Gastrocnemius medialis (tissue), 4 donors: ENCODE measurements at regions of chrX and their contacts with region 1.

Region 1: GRCh38 chrX:48945516-48946348 is 11.7 kb downstream of the OTUD5 start:
- DNase-seq: peak in 1 of 2 donors; percentile 15
- ATAC-seq: no peak
- H3K4me3 ChIP-seq: no peak overlapping the region
- H3K27ac ChIP-seq: no peak overlapping the region
- H3K4me1 ChIP-seq: peaks cover 0 to 5% of the 10 kb centered on the region in 2 donors
- H3K27me3 ChIP-seq: no peaks in the 10 kb centered on the region
- CTCF ChIP-seq: peak; percentile 17 to 57 (median 29)
- POLR2A ChIP-seq: no peak

Region 2: DNA sequence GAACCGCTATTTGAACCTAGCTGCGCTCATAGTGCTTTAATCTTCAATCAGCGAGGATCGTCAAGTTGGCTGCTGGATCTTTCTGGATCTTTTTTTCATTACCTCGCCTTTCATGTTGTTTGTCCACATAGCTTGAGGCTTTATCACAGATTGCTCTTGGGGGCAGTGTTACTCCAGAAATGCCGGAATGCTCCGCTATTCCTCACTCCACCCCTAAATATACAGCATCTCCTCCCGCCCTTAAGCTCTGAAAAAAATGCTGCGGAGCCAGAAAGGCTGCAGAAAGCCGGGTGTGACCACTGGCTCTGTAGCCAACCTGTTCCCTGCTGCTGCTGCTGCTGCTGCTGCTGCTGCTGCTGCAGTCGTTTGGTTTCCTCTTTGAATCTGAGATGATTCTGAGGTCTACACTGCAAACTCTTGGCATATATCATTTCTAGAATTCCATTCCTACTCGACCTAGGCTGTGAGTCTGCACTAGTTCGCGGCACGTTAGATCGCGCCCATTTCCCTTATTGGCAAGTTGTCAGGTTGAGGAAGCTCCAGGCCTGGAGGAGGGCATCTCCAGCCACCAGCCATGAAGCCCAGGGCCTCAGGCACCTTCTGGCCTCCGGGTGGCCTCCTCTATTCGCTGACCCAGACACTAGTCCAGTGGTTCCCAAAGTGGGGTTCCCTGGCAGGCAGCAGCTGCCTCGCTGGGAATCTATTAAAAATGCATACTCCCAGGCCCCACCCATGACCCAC is 314.2 kb before region 1 on chrX:
- in situ Hi-C with region 1: loop called in 1 of 4 experiments (anchors 25 kb)
- intact Hi-C with region 1: no loop called
- DNase-seq: peak; percentile 25 to 55
- ATAC-seq: peak; percentile 77 to 78
- H3K4me3 ChIP-seq: no peak overlapping the region
- H3K27ac ChIP-seq: no peak overlapping the region
- H3K4me1 ChIP-seq: no peaks in the 10 kb centered on the region
- H3K27me3 ChIP-seq: no peaks in the 10 kb centered on the region
- CTCF ChIP-seq: peak in 3 of 5 experiments; percentile 12 to 28 (median 26)
- POLR2A ChIP-seq: no peak

Region 3: DNA sequence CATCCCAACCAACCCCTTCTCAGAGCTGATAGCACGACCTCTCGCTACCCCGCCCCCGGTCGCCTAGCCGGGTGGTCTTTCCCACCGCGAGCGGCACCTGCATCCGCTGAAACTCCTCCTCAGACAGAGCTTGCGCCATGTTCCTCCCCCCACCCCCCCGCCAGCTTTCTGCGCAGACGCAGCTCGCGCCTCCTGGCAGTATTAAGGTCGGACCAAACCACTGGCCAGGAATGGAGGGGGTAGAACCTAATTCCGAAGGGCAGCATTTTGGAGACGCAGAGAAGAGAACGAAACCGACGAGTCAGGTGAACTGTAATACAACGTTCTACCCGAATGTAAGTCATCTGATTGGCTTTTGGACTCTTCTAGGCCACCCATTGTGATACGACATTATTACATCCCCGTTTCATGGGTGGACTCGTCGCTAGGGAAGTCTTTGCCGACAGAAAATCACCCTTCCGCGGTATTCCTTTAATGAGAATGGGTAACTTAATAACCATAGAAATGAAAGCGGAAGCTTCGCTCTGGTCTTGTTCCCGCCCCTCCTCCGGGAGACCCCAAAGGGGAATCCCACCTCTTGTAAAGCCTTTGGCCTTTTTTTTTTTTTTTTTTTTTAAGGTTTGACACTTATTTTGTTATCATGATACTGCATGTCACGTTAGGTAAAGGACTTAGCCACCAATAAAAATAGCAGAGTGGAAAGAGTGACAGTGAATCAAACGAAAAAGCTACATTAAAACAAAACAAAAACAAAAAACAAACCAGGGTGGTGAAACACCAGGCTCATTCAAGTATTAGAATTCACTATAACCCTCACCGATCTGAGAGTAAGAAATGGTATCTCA is 56.6 kb after region 1 on chrX and contains the start of gene GRIPAP1:
- in situ Hi-C with region 1: no loop called
- intact Hi-C with region 1: no loop called
- DNase-seq: peak; percentile 47 to 61
- ATAC-seq: peak; percentile 96 to 97
- H3K4me3 ChIP-seq: peak within 1 kb of the TSS; percentile 69 to 89 (median 75)
- H3K27ac ChIP-seq: peak within 1 kb of the TSS; percentile 77 to 89 (median 83)
- H3K4me1 ChIP-seq: peaks cover 3 to 7% of the 10 kb centered on the region in 2 donors
- H3K27me3 ChIP-seq: no peaks in the 10 kb centered on the region
- CTCF ChIP-seq: no peak
- POLR2A ChIP-seq: peak; percentile 46 to 53
- total RNA-seq, gene GRIPAP1: 8.6 to 19.3 (median 10.1) TPM

Region 4: GRCh38 chrX:49079489-49080428 is 134.0 kb after region 1 on chrX and contains the start of gene WDR45:
- in situ Hi-C with region 1: no loop called
- intact Hi-C with region 1: no loop called
- DNase-seq: peak; percentile 61 to 70
- ATAC-seq: peak; percentile 96 to 98
- H3K4me3 ChIP-seq: peak within 1 kb of the TSS; percentile 60 to 79 (median 72)
- H3K27ac ChIP-seq: peak within 1 kb of the TSS; percentile 88 to 97 (median 94)
- H3K4me1 ChIP-seq: peaks cover 0 to 6% of the 10 kb centered on the region in 2 donors
- H3K27me3 ChIP-seq: no peaks in the 10 kb centered on the region
- CTCF ChIP-seq: no peak
- POLR2A ChIP-seq: peak; percentile 68 to 78
- total RNA-seq, gene WDR45: 98.2 to 125 (median 105) TPM

Region 5: GRCh38 chrX:49184294-49185061 is 238.7 kb after region 1 on chrX:
- in situ Hi-C with region 1: no loop called
- intact Hi-C with region 1: no loop called
- DNase-seq: peak; percentile 81 to 90
- ATAC-seq: peak; percentile 86 to 88
- H3K4me3 ChIP-seq: peak overlapping the region; percentile 51 to 69 (median 61)
- H3K27ac ChIP-seq: peak overlapping the region; percentile 83 to 93 (median 92)
- H3K4me1 ChIP-seq: peaks cover 8 to 12% of the 10 kb centered on the region in 2 donors
- H3K27me3 ChIP-seq: no peaks in the 10 kb centered on the region
- CTCF ChIP-seq: no peak
- POLR2A ChIP-seq: peak; percentile 44 to 59